SK-N-SH (cell line): ENCODE measurements at regions of chr16 and their contacts with region 1.

Region 1: GRCh38 chr16:788394-789126 is at the start of gene CHTF18:
- DNase-seq: peak; percentile 100
- H3K4me3 ChIP-seq: peak within 1 kb of the TSS; percentile 84 to 91
- H3K27ac ChIP-seq: peak within 1 kb of the TSS in 1 of 2 experiments; percentile 76; a peak in 2 of 4 replicates
- H3K4me1 ChIP-seq: peaks cover 0 to 19% of the 10 kb centered on the region in 2 experiments; a peak in 1 of 4 replicates
- H3K27me3 ChIP-seq: no peaks in the 10 kb centered on the region
- CTCF ChIP-seq: no peak
- EP300 ChIP-seq: no peak
- RAD21 ChIP-seq: no peak
- polyA plus RNA-seq, gene CHTF18: 17.7 and 18.0 TPM in 2 replicates

Region 2: DNA sequence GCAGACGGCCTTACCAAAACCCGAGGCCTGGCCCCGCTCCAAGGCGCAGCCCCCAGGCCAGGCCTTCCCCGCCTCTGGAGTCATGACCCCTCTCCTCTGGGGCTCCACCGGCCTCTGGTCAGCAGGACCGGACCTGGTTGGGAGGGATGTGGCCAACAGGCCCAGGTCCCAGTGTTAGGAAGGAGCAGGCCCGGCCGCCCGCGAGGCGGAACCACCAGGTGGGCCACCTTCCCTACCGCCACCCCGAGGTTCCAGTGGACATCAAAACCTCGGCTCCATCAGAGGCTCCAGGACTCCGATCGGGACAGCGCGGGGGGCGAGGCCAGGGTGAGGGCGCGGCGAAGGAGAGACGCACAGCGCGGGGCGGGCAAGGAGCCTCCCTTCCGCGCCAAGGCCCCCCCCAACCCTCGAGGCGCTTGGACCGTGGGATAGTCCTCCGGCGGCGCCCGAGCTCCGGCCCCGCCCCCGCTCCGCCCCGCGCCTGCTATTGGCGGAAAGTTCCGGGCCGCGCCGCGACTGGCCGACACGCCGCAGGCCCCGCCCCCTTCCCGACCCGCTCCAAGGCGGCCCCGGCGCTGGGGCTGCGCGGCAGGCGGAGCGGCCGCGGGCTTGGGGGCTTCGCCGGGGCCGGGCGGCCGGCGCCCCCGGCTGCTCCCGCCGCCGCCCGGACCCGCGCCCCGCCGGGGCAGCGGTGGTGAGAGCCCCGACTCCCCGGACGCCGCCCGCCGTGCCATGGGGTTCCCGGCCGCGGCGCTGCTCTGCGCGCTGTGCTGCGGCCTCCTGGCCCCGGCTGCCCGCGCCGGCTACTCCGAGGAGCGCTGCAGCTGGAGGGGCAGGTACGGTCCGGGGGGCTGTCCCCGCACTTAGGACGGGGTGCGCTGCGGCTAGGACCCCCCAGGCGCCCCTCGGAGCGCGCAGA is 73.7 kb before region 1 on chr16 and contains the start of gene METRN:
- CTCF ChIA-PET with region 1: interaction called, 127 read pairs
- POLR2A ChIA-PET with region 1: interaction called, 18 read pairs
- DNase-seq: peak; percentile 92
- H3K4me3 ChIP-seq: peak within 1 kb of the TSS; percentile 66 to 70
- H3K27ac ChIP-seq: peak within 1 kb of the TSS; percentile 56 to 91; a peak in 3 of 4 replicates
- H3K4me1 ChIP-seq: peaks cover 23 to 51% of the 10 kb centered on the region in 2 experiments; a peak in 3 of 4 replicates
- H3K27me3 ChIP-seq: no peaks in the 10 kb centered on the region
- CTCF ChIP-seq: no peak
- EP300 ChIP-seq: no peak
- RAD21 ChIP-seq: no peak
- polyA plus RNA-seq, gene METRN: 52.4 and 59.7 TPM in 2 replicates

Region 3: GRCh38 chr16:728131-728889 is 60.2 kb before region 1 on chr16:
- CTCF ChIA-PET with region 1: interaction called, 35 read pairs
- POLR2A ChIA-PET with region 1: no interaction called
- DNase-seq: peak; percentile 96
- H3K4me3 ChIP-seq: peak overlapping the region; percentile 29 to 78; a peak in 3 of 4 replicates
- H3K27ac ChIP-seq: peak overlapping the region in 1 of 2 experiments; percentile 89; a peak in 2 of 4 replicates
- H3K4me1 ChIP-seq: peaks cover 0 to 14% of the 10 kb centered on the region in 2 experiments; a peak in 1 of 4 replicates
- H3K27me3 ChIP-seq: no peaks in the 10 kb centered on the region
- CTCF ChIP-seq: no peak
- EP300 ChIP-seq: no peak
- RAD21 ChIP-seq: no peak

Region 4: GRCh38 chr16:769934-770333 is 18.6 kb before region 1 on chr16:
- CTCF ChIA-PET with region 1: interaction called, 10 read pairs
- POLR2A ChIA-PET with region 1: no interaction called
- DNase-seq: no peak
- H3K4me3 ChIP-seq: no peak overlapping the region
- H3K27ac ChIP-seq: no peak overlapping the region
- H3K4me1 ChIP-seq: no peaks in the 10 kb centered on the region
- H3K27me3 ChIP-seq: no peaks in the 10 kb centered on the region
- CTCF ChIP-seq: no peak
- EP300 ChIP-seq: no peak
- RAD21 ChIP-seq: no peak